GM23248 (cell line): ENCODE measurements at regions of chr12 and their contacts with region 1.

Region 1: DNA sequence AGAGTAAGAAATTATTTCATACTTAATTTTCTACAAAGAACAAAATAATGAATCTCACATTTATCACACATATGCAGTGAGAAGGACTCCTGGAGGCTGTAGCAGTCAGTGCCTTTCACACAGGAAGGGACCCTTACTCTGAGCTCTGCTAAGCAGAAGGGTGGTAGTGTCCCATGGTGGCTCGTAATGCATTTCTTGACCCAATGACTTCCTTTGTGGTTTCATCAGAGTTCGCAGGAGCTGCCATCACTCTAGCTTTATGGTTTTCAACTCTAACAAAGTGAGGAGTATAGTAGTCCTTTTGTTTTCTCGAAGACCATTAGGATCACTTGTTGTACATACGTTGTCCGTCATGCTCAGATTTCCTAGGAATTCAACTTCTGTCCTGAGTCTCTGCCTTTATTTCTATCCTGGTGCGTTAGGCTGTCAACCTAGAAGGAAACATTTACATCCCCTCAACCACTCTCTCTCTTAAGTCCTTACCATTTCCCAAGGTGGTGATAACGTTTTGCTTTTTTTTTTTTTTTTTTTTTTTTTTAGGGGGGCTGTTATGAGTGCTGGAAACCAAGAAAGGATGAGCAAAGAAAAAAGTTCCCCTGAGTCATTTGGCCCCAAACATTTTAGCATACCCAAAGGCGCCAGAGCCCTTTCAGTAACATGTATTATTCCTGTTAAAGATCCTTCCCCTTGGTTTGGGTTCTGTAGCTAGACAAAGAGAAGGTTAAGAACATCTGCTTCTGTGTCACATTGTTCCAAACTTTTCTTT is 37.2 kb downstream of the GABARAPL1 start:
- DNase-seq: no peak
- H3K4me3 ChIP-seq: no peak overlapping the region
- H3K27ac ChIP-seq: no peak overlapping the region
- H3K4me1 ChIP-seq: no peaks in the 10 kb centered on the region
- H3K27me3 ChIP-seq: no peaks in the 10 kb centered on the region

Region 2: GRCh38 chr12:10802587-10802986 is 552.7 kb after region 1 on chr12 and contains the start of gene TAS2R7:
- in situ Hi-C with region 1: no loop called
- DNase-seq: no peak
- H3K4me3 ChIP-seq: no peak within 1 kb of the TSS
- H3K27ac ChIP-seq: no peak within 1 kb of the TSS
- H3K4me1 ChIP-seq: no peaks in the 10 kb centered on the region
- H3K27me3 ChIP-seq: 0 out of 2 replicates have a peak, but pooled peaks cover 7% of the 10 kb centered on the region
- total RNA-seq, gene TAS2R7: not detected in 2 replicates

Region 3: DNA sequence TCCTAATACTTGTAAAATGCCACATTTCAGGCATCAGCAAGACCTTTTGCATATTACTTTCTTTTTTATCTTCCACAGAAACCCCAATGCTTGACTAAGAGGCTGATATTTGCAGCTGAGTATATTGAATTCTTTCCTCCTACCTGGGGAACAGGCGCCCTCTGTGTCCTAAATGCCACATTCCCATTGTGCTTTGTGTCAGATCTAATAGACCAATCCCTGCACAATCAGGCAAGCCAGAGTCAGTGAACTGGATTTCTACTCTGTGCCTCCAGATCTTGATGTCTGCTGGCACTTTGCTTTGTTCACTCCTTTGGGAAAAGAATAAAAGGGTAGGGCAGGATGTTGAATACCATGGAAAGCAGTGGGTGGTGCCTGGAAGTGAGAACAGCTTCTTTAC is 959.2 kb after region 1 on chr12:
- in situ Hi-C with region 1: loop called (anchors 25 kb)
- DNase-seq: no peak
- H3K4me3 ChIP-seq: no peak overlapping the region
- H3K27ac ChIP-seq: no peak overlapping the region
- H3K4me1 ChIP-seq: no peaks in the 10 kb centered on the region
- H3K27me3 ChIP-seq: no peaks in the 10 kb centered on the region